Endothelial cell of umbilical vein (primary cell): ENCODE measurements at regions of chr7 and their contacts with region 1.

Region 1: GRCh38 chr7:127253281-127254162 is 781 bp upstream of the GRM8 start:
- DNase-seq: peak; percentile 66
- H3K4me3 ChIP-seq: peak overlapping the region; percentile 27 to 59 (median 41)
- H3K27ac ChIP-seq: no peak overlapping the region
- H3K4me1 ChIP-seq: peaks cover 9% of the 10 kb centered on the region
- H3K27me3 ChIP-seq: peaks cover 36 to 52% of the 10 kb centered on the region in 2 experiments
- CTCF ChIP-seq: peak; percentile 70 to 89
- POLR2A ChIP-seq: no peak

Region 2: GRCh38 chr7:126700807-126701604 is 552.5 kb before region 1 on chr7:
- CTCF ChIA-PET with region 1: no interaction called
- POLR2A ChIA-PET with region 1: no interaction called
- dilution Hi-C with region 1: no loop called
- intact Hi-C with region 1: loop called (anchors 1 kb)
- DNase-seq: peak; percentile 98
- H3K4me3 ChIP-seq: peak overlapping the region in 1 of 3 experiments; percentile 26
- H3K27ac ChIP-seq: peak overlapping the region; percentile 89
- H3K4me1 ChIP-seq: peaks cover 21% of the 10 kb centered on the region
- H3K27me3 ChIP-seq: no peaks in the 10 kb centered on the region
- CTCF ChIP-seq: no peak
- POLR2A ChIP-seq: peak; percentile 46

Region 3: GRCh38 chr7:126803060-126803665 is 450.4 kb before region 1 on chr7:
- CTCF ChIA-PET with region 1: interaction called, 30 read pairs
- POLR2A ChIA-PET with region 1: no interaction called
- dilution Hi-C with region 1: no loop called
- intact Hi-C with region 1: loop called (anchors 1 kb)
- DNase-seq: peak; percentile 65
- H3K4me3 ChIP-seq: no peak overlapping the region
- H3K27ac ChIP-seq: no peak overlapping the region
- H3K4me1 ChIP-seq: no peaks in the 10 kb centered on the region
- H3K27me3 ChIP-seq: no peaks in the 10 kb centered on the region
- CTCF ChIP-seq: peak; percentile 43
- POLR2A ChIP-seq: no peak

Region 4: GRCh38 chr7:126856691-126857291 is 396.7 kb before region 1 on chr7:
- CTCF ChIA-PET with region 1: no interaction called
- POLR2A ChIA-PET with region 1: no interaction called
- dilution Hi-C with region 1: no loop called
- intact Hi-C with region 1: loop called (anchors 2 kb)
- DNase-seq: peak; percentile 4
- H3K4me3 ChIP-seq: no peak overlapping the region
- H3K27ac ChIP-seq: no peak overlapping the region
- H3K4me1 ChIP-seq: no peaks in the 10 kb centered on the region
- H3K27me3 ChIP-seq: no peaks in the 10 kb centered on the region
- CTCF ChIP-seq: peak; percentile 37 to 42
- POLR2A ChIP-seq: no peak

Region 5: DNA sequence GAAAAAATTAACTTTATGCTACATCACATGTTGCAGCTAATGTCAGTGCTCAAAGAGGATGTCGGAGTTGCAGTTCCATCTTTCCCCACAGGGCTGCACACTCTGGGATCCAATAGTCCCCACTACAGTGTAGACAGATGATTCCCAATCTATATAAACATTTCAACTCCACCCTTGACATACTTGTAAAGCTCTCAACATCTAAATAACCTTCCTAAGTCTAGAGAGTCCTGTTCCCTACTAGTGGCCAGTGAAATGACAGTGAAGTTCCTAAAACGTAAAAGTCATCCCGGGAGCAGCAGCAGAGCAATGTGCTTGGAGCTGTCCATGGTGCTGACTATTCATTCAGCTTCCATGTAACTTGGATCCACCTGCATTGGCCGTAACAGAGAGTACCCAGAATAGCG is 145.9 kb before region 1 on chr7:
- CTCF ChIA-PET with region 1: no interaction called
- POLR2A ChIA-PET with region 1: no interaction called
- dilution Hi-C with region 1: no loop called
- intact Hi-C with region 1: loop called (anchors 1 kb)
- DNase-seq: peak; percentile 21
- H3K4me3 ChIP-seq: no peak overlapping the region
- H3K27ac ChIP-seq: no peak overlapping the region
- H3K4me1 ChIP-seq: no peaks in the 10 kb centered on the region
- H3K27me3 ChIP-seq: no peaks in the 10 kb centered on the region
- CTCF ChIP-seq: peak in 1 of 2 donors; percentile 34
- POLR2A ChIP-seq: no peak

Region 6: DNA sequence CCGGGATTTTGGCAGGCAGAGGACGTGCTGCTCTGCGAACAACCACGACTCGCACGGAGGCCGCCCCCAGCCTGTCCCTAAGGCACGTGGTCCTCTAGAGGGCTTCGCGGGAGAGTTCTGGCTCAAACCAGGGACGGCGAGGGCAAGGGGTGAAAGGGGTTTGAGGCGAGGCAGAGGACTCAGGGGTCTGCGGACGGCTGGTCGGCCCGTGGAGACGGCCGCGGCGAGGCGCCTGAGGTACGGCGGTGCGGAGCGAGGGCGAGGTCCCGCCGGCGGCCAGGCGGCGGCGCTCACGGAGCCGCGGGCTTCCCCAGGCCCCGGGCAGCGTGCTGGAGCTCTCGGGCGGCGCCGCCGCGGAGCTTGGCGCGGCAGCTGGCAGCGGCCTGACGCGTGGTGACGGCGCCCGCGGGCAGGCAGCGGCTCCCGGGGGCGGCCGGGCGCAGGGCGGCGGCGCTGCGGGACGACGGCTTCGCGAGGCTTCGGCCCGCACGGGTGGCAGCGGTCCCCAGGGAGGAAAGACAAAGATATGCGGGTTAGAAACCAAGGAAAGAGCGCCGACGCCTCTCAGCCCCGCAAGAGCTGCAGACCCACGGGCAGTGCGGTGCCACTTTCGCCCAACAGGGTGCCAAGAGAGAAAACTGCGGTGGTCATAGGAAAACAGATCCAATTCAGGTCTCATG is 94.2 kb after region 1 on chr7:
- CTCF ChIA-PET with region 1: interaction called, 4 read pairs
- POLR2A ChIA-PET with region 1: no interaction called
- dilution Hi-C with region 1: no loop called
- intact Hi-C with region 1: loop called (anchors 1 kb)
- DNase-seq: peak; percentile 70
- H3K4me3 ChIP-seq: peak overlapping the region; percentile 29 to 63 (median 35)
- H3K27ac ChIP-seq: no peak overlapping the region
- H3K4me1 ChIP-seq: peaks cover 8% of the 10 kb centered on the region
- H3K27me3 ChIP-seq: no peaks in the 10 kb centered on the region
- CTCF ChIP-seq: peak; percentile 51 to 56
- POLR2A ChIP-seq: no peak

Region 7: DNA sequence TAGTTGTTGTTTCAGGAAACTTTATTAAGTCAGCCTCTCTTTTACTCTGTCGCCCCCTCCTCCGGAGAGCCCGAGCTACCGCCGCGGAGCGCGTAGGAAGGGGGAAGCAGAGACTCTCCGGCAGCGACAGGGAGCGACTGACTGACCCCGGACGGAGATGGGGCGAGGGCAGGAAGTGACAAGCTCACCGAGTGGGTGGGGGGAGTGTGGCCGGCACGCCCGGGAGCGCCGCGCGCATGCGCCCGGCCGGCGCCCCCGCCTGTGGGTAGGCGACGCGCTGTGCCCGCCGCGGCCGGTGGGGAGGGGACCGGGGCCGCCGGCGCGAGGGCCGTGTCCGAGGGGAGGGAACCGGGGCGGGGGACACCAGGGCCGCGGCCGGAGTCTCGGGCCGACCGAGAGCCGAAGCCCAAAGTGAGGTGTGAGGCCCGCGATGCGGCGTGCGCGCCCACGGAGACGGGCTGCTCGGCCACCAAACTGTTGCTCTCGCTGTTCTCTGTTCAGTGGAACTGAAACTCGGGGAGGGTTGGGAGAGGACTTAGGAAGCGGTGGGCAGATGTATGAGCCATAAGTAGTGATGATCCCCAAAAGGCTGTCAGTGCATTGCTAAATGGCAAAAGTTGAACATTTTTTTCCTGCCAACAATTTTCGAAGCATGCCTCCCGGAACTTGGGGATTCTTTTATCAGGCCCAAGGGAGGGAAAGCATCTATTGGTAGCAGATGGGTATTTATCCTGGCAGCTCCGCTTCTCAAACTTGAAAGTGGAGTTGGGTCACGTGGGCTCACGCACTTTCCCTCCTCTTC is 139.2 kb after region 1 on chr7 and contains the start of gene ZNF800:
- CTCF ChIA-PET with region 1: no interaction called
- POLR2A ChIA-PET with region 1: no interaction called
- dilution Hi-C with region 1: no loop called
- intact Hi-C with region 1: loop called (anchors 5 kb)
- DNase-seq: peak; percentile 85
- H3K4me3 ChIP-seq: peak within 1 kb of the TSS; percentile 88 to 97 (median 88)
- H3K27ac ChIP-seq: peak within 1 kb of the TSS; percentile 90
- H3K4me1 ChIP-seq: peaks cover 20% of the 10 kb centered on the region
- H3K27me3 ChIP-seq: peaks cover 7 to 31% of the 10 kb centered on the region in 2 experiments
- CTCF ChIP-seq: no peak
- POLR2A ChIP-seq: peak; percentile 72
- total RNA-seq, gene ZNF800: 31.5 and 35.4 TPM in 2 replicates